Ovary (tissue), 10 donors: ENCODE measurements at regions of chr12 and their contacts with region 1.

Region 1: DNA sequence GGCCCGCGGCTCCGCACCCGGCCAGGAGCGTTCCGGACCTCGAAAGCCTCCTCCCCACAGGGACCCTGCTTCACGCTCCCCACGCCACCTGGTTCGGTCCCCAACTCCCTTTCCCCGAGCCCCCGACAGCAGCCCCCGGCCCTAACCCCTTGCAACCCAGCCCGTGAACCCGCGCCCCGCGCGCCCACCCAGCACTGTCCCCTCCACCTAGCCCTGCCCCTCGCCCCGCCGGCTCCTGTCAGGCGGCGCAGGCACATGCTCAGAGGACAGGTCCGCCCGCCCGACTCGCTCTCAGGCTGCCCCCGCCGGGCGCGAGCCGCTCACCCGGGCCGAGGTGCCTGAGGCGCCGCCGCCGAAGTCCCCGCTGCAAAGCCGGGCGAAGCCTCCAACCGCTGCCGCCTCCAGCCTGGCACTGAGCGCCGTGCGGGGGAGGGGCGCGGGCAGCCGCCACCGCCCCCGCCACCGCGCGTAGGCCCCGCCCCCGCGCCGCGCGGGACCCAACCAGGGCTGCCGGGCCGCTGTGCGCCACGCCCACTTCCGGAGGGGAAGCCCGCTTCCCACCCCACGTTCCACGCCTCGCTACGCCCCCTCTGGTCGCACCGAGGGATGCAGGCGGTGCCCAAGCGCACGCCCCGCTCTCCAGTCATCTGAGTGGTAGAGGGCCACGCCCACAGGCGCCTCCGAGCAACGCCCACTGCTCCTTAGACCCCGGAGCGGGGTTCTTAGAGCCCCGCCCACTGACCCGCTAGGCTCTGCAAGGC is at the start of gene CORO1C:
- DNase-seq: peak; percentile 95 to 97 (median 97)
- H3K4me3 ChIP-seq: peak within 1 kb of the TSS; percentile 82
- H3K27ac ChIP-seq: peak within 1 kb of the TSS; percentile 91
- H3K4me1 ChIP-seq: no peaks in the 10 kb centered on the region
- H3K27me3 ChIP-seq: no peaks in the 10 kb centered on the region
- CTCF ChIP-seq: peak; percentile 62 to 89 (median 88)
- EP300 ChIP-seq: no peak
- POLR2A ChIP-seq: peak; percentile 88
- total RNA-seq, gene CORO1C: 58.7 to 143 (median 113) TPM

Region 2: DNA sequence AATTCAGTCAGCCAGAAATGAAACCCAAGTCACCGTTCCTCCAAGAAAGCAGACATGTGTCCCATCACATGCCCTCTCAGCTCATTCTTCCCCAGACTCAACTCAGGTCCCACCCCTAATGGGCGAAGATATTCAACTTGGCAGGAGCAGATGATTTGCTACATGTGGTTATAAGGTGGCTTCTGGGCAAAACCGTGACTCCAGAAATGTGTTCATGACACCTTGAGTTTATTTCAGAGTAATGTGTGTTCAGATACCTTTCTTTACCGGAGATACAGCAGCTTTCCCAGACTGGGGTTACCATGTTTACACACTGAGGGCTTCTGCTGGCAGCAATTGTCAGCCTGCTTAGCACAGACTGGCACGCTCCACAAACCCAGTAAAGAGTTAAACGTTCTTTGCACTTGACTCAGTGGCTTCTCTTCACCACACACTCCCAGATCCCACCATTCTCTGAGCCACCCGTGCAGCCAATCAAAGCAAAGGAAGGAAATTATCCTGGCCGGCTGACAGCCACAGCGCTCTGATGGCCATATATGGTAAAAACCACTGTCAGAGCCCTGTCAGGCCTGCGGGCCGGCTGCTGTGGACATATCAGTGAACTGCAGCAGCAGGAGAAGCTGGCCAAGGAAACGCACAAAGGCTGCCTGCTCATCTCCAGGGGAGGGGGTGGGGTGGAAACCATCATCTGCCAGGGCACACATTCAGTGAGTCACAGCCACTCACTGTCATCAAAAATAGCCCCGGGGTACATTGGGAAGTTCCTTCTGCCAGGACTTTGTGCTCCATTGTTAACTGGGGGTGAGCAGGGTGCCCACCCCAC is 39.9 kb before region 1 on chr12:
- intact Hi-C with region 1: loop called in 2 of 4 experiments (anchors 5 kb)
- DNase-seq: peak; percentile 90 to 95 (median 95)
- H3K4me3 ChIP-seq: peak overlapping the region; percentile 17
- H3K27ac ChIP-seq: peak overlapping the region; percentile 79 to 82
- H3K4me1 ChIP-seq: peaks cover 26% of the 10 kb centered on the region
- H3K27me3 ChIP-seq: no peaks in the 10 kb centered on the region
- CTCF ChIP-seq: peak; percentile 23 to 80 (median 75)
- EP300 ChIP-seq: peak; percentile 41
- POLR2A ChIP-seq: no peak

Region 3: GRCh38 chr12:108784270-108784669 is 53.0 kb after region 1 on chr12:
- intact Hi-C with region 1: no loop called
- DNase-seq: no peak
- H3K4me3 ChIP-seq: no peak overlapping the region
- H3K27ac ChIP-seq: no peak overlapping the region
- H3K4me1 ChIP-seq: peaks cover 6% of the 10 kb centered on the region
- H3K27me3 ChIP-seq: no peaks in the 10 kb centered on the region
- CTCF ChIP-seq: no peak
- EP300 ChIP-seq: no peak
- POLR2A ChIP-seq: no peak

Region 4: GRCh38 chr12:108856428-108857157 is 125.3 kb after region 1 on chr12:
- intact Hi-C with region 1: loop called in 1 of 4 experiments (anchors 10 kb)
- DNase-seq: peak; percentile 21 to 63 (median 57)
- H3K4me3 ChIP-seq: peak overlapping the region; percentile 82
- H3K27ac ChIP-seq: peak overlapping the region; percentile 67 to 70
- H3K4me1 ChIP-seq: peaks cover 6% of the 10 kb centered on the region
- H3K27me3 ChIP-seq: no peaks in the 10 kb centered on the region
- CTCF ChIP-seq: no peak
- EP300 ChIP-seq: no peak
- POLR2A ChIP-seq: no peak